Breast epithelium (tissue), 4 donors: ENCODE measurements at regions of chr10 and their contacts with region 1.

Region 1: DNA sequence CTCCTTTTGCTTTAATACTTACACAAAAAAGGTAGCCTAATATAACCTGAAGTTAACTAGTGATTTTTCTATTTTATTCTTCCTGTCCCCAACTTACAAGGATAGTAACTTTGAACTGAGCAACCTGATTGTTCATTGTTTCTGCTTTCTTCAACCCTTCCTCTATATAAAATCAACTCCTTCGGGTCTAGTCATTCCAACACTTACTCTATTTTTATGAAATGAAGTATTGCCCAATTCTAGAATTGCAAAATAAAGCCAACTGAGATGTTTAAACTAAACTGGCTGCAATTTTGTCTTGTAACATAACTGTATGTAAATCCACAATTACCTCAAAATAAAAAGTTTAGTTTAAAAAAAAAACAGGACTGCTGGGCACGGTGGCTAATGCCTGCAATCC is 20.3 kb upstream of the DNA2 start:
- DNase-seq: no peak
- H3K4me3 ChIP-seq: no peak overlapping the region
- H3K27ac ChIP-seq: no peak overlapping the region
- H3K4me1 ChIP-seq: no peaks in the 10 kb centered on the region
- H3K27me3 ChIP-seq: no peaks in the 10 kb centered on the region
- CTCF ChIP-seq: no peak
- POLR2A ChIP-seq: no peak

Region 2: DNA sequence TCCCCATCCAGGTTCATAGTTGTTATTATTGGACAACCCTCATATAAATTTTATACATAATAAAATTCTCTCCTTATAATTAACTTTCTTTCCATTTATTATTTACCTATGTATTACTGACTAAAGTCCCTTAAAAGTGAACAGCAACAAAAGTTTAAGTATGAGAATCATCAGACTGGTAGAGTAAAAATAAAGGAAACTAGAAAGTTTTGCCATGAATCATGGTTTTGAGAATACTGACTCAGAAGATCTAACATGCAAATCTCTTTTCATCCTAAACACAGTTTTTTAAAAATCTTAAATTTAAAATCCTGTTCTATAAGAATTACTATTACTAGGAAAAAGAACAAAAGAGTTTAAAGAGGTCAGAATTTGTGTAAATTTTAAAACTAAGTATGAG is 449.1 kb before region 1 on chr10:
- intact Hi-C with region 1: loop called (anchors 10 kb)
- DNase-seq: no peak
- H3K4me3 ChIP-seq: no peak overlapping the region
- H3K27ac ChIP-seq: no peak overlapping the region
- H3K4me1 ChIP-seq: no peaks in the 10 kb centered on the region
- H3K27me3 ChIP-seq: no peaks in the 10 kb centered on the region
- CTCF ChIP-seq: no peak
- POLR2A ChIP-seq: no peak

Region 3: GRCh38 chr10:68727146-68727545 is 235.0 kb after region 1 on chr10:
- intact Hi-C with region 1: no loop called
- DNase-seq: no peak
- H3K4me3 ChIP-seq: no peak overlapping the region
- H3K27ac ChIP-seq: no peak overlapping the region
- H3K4me1 ChIP-seq: no peaks in the 10 kb centered on the region
- H3K27me3 ChIP-seq: no peaks in the 10 kb centered on the region
- CTCF ChIP-seq: no peak
- POLR2A ChIP-seq: no peak